Dorsolateral prefrontal cortex (tissue), 120 donors: ENCODE measurements at regions of chr11 and their contacts with region 1.

Region 1: DNA sequence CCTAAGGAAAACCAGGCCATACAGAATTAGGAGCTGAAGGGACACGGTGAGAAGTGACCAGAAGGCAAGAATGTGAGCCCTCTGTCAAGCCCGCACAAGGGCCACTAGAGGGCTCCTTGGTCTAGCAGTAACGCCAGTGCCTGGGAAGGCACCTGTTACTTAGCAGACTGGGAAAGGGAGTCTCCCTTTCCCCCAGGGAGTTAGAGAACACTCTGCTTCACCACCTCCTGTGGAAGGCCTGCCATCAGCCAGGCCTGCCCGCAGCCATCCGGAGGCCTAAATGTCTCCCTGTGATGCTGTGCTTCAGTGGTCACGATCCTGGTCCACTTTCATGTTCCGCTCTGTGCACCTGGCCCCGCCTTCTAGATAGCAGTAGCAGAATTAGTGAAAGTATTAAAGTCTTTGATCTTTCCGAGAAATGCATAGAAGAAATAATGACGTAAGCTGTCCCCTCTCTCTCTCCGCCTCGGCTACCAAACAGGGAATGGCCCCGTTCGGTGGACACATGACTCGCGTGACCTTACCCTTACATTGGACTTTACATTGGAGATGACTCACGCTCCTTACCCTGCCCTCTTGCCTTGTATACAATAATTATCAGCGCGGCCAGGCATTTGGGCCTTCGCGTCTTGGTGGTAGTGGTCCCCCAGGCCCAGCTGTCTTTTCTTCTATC is 10.7 kb upstream of the GSTP1 start:
- DNase-seq: peak in 9 of 10 donors; percentile 43 to 67 (median 53)
- H3K4me3 ChIP-seq: no peak overlapping the region
- H3K27ac ChIP-seq: no peak overlapping the region
- H3K27me3 ChIP-seq: peaks cover 0 to 5% (median 0%) of the 10 kb centered on the region in 45 donors
- CTCF ChIP-seq: peak in 55 of 56 donors; percentile 19 to 84 (median 71)

Region 2: DNA sequence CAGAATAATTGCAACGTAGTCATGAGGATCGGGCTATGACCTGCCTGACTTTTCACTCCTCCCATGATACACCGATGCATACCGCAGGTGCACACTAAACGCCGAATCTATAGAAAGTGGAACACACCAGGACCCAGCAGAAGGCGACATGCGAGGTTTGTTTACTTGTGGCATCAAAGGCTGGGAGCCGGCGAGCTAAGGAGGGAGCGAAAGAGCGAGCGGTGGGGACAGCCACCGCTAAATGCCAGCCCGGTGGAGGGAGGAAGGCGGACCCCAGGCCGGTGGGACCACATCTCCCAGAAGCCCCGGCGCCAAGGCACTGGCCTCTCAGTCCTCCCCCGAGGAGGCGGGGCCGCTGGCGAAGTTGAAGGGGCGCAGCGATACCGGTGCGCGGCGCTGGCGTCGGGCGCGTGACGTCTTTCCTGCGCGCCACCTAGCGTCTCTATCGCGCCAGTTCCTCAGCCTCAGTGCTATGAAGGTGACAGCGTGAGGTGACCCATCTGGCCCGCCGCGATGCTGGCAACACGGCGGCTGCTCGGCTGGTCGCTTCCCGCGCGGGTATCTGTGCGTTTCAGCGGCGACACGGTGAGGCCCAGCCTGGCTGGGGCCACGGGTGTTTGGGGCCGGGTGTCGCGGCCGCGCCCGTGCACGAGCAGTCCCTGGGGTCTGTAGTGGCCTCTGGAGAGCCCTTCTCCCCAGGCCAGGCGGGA is 33.8 kb after region 1 on chr11 and contains the start of gene NDUFV1:
- intact Hi-C with region 1: loop called in 1 of 2 experiments (anchors 1 kb)
- DNase-seq: peak; percentile 92 to 99 (median 97)
- H3K4me3 ChIP-seq: peak within 1 kb of the TSS; percentile 71 to 100 (median 98)
- H3K27ac ChIP-seq: peak within 1 kb of the TSS in 58 of 59 donors; percentile 2 to 96 (median 83)
- H3K27me3 ChIP-seq: no peaks in the 10 kb centered on the region
- CTCF ChIP-seq: peak; percentile 21 to 96 (median 83)
- total RNA-seq, gene NDUFV1: 176 to 398 (median 251) TPM